ENCODE measurements at regions of chr2 and their contacts with region 1.

Region 1: DNA sequence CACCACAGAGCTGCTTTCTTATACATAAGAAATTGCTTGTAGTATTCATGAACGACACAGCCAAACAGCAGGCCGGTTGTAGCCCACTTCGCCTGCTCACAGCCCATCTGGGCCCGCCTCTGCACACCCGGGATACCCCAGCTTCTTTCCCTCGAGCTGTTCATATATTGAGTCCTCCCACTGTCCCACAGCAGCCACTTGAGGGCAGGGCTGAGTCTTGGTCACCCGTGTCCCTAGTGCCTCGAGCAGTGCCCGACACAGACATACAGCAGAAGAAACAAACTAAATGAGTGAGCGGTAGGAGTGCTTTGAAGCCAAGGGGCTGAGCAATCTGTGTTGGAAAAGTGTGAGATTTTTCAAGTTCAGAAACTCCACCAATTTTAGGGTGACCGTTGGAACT is 251.4 kb downstream of the KLHL29 start:
- DNase-seq: no peak
- H3K4me3 ChIP-seq: no peak overlapping the region
- CTCF ChIP-seq: peak; percentile 28

Region 2: GRCh38 chr2:23617167-23617810 is 19.1 kb before region 1 on chr2:
- CTCF ChIA-PET with region 1: interaction called, 15 read pairs
- POLR2A ChIA-PET with region 1: no interaction called
- DNase-seq: peak; percentile 45
- H3K4me3 ChIP-seq: peak overlapping the region; percentile 26; the same call in 1 of the 2 replicates
- CTCF ChIP-seq: peak; percentile 90

Region 3: DNA sequence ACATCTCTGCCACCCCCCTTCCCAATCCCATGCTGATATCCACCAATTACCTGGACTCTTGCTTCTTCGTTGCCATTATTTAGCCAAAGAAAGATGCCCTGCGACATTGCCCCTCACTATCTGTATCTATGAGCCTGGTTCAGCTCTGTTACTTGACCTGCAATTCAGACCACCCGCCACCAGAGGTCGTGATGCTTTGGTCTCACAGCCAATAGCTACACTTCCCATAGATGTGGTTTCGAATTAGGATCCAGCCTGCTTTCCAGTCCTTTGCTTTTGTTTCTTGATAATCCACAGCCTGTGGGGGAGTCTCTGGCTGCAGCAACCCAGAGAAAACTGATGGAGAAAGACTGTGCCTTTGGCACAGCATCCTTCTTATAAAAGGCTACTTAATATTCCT is 12.0 kb before region 1 on chr2:
- CTCF ChIA-PET with region 1: interaction called, 11 read pairs
- POLR2A ChIA-PET with region 1: no interaction called
- DNase-seq: no peak
- H3K4me3 ChIP-seq: no peak overlapping the region
- CTCF ChIP-seq: peak; percentile 13

Region 4: DNA sequence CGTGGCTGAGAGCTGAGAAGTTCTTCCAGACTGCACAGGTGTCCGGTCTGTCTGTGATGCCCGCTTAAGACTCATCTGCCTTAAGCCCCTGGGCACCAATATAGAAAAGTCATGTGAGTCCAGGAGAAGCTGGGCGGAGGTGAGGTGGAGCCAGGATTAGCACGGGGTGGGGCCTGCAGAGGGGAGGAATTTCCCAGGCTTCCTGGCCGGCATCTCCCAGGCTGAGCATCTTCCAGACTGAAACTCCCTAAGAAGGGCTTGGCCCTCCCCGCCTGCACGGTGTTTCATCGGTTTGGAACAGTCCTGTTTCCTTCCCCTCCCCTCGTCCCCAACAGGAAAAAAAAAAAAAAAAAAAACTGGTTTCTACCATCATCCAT is 20.2 kb after region 1 on chr2:
- CTCF ChIA-PET with region 1: no interaction called
- POLR2A ChIA-PET with region 1: no interaction called
- DNase-seq: no peak
- H3K4me3 ChIP-seq: no peak overlapping the region
- CTCF ChIP-seq: no peak

Region 5: GRCh38 chr2:23760736-23761135 is 124.3 kb after region 1 on chr2:
- CTCF ChIA-PET with region 1: interaction called, 14 read pairs
- POLR2A ChIA-PET with region 1: no interaction called
- DNase-seq: no peak
- H3K4me3 ChIP-seq: no peak overlapping the region
- CTCF ChIP-seq: no peak

Region 6: GRCh38 chr2:24075915-24076848 is 439.8 kb after region 1 on chr2 and contains the start of gene SF3B6:
- CTCF ChIA-PET with region 1: no interaction called
- POLR2A ChIA-PET with region 1: no interaction called
- DNase-seq: peak; percentile 88
- H3K4me3 ChIP-seq: peak within 1 kb of the TSS; percentile 97
- CTCF ChIP-seq: no peak